Activated naive CD8-positive, alpha-beta T cell treated with anti-CD3 and anti-CD28 coated beads, Interleukin-2, amount 10 ng/mL, durations not matched to agents 7 days and 5 days (primary cell): ENCODE measurements at regions of chr20 and their contacts with region 1.

Region 1: DNA sequence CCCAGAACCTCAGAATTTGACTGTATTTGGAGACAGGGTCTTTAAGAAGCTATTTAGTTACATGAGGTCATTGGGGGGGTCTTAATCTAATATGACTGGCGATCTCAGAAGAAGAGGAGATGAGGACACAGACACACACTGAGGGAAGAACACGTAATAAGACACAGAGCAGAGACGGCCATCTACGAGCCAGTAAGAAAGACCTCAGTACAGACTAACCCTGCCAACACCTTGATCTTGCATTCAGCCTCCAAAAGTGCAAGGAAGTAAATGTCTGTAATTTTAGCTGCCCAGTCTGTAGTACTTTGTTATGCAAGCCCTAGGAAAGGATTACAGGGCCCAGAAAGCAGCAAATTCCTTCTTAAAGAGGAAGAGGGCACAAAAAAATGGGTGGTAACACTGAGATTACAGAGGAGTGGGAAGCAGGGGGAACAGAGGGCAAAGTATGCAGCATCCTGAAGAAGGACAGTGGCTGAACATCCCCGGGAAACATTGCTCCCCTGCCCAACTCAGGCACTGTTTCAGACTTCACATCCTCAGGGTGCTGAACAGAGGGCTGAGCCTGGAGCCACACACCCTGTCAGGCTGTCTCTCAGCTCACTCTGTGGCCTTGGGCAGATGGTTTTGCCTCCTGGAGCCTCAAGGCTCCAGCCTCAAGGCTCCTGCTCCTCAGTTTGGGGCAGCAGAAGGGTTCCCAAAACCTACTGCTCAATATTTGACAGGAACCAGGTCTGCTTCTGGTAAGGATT is 27.9 kb upstream of the SIRPG start:
- DNase-seq: no peak
- ATAC-seq: peak; percentile 75
- H3K4me3 Mint-ChIP-seq: peak overlapping the region; percentile 89
- H3K27ac Mint-ChIP-seq: peak overlapping the region; percentile 92
- H3K4me1 Mint-ChIP-seq: peaks cover 57% of the 10 kb centered on the region
- H3K27me3 Mint-ChIP-seq: no peaks in the 10 kb centered on the region

Region 2: DNA sequence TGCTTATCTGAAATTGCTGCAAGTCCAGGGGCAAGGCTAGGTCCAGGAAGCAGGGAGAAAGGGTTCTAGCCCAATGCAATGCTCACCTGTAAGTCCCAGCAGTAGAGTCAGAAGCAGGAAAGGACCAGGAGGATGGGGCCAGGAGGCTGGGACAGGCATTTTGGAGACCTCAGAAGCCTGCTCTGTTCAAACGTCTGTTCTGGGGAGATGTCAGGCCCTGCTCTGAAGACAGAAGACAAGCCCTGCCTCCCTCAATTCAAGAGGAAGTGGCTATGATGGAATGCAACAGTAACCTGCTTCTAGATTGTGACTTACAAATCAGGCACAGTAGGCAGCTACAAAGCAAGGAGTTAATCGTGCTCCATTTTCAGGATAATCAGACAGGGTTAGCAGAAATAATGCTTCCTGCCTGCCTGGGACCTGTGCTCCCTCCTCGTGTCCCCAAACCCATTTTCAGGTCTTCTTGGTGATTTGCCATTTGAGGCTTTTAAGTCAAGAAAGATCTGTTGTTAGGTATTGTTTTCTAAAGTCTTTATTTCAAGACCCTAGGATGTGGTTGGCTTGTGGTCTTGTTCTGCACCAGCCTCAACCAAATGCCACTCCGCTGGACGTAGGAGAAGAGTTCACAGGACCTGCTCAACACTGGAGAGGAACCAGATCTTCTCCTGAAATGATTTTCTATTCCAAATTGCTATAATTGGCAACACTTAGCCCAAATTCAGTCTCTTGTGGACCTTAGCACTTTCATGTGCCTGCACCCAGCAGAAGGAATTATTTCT is 27.7 kb before region 1 on chr20 and contains the start of gene SIRPG:
- POLR2A ChIA-PET with region 1: interaction called, 14 read pairs
- DNase-seq: peak; percentile 61
- ATAC-seq: peak; percentile 79
- H3K4me3 Mint-ChIP-seq: peak within 1 kb of the TSS; percentile 91
- H3K27ac Mint-ChIP-seq: peak within 1 kb of the TSS; percentile 97
- H3K4me1 Mint-ChIP-seq: peaks cover 75% of the 10 kb centered on the region
- H3K27me3 Mint-ChIP-seq: no peaks in the 10 kb centered on the region
- total RNA-seq, gene SIRPG: 98.7 to 100 TPM

Region 3: DNA sequence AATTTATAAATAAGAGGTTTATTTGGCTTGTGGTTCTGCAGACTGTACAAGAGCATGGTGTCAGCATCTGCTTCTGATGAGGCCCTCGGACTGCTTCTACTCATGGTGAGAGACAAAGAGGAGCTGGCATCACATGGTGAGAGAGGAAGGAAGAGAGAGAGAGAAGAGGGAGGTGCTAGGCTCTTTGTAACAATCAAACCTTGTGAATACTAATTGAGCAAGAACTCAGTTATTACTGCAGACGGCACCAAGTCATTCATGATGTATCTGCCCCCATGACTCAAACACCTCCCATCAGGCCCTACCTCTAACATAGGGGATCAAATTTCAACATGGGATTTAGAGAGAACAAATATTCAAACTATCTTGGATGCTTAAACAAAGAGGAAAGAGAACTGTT is 21.6 kb before region 1 on chr20:
- POLR2A ChIA-PET with region 1: interaction called, 13 read pairs
- DNase-seq: no peak
- ATAC-seq: peak; percentile 21
- H3K4me3 Mint-ChIP-seq: peak overlapping the region; percentile 71
- H3K27ac Mint-ChIP-seq: peak overlapping the region; percentile 73
- H3K4me1 Mint-ChIP-seq: peaks cover 83% of the 10 kb centered on the region
- H3K27me3 Mint-ChIP-seq: no peaks in the 10 kb centered on the region